Testis (tissue), 5 donors: ENCODE measurements at regions of chr14 and their contacts with region 1.

Region 1: GRCh38 chr14:39432179-39432618 is at the start of gene FBXO33:
- DNase-seq: peak; percentile 97
- H3K4me3 ChIP-seq: peak within 1 kb of the TSS; percentile 82 to 98
- H3K27ac ChIP-seq: peak within 1 kb of the TSS; percentile 94 to 99
- H3K4me1 ChIP-seq: peaks cover 18% of the 10 kb centered on the region
- H3K27me3 ChIP-seq: no peaks in the 10 kb centered on the region
- CTCF ChIP-seq: no peak
- POLR2A ChIP-seq: no peak
- total RNA-seq, gene FBXO33: 20.6 to 27.5 TPM

Region 2: DNA sequence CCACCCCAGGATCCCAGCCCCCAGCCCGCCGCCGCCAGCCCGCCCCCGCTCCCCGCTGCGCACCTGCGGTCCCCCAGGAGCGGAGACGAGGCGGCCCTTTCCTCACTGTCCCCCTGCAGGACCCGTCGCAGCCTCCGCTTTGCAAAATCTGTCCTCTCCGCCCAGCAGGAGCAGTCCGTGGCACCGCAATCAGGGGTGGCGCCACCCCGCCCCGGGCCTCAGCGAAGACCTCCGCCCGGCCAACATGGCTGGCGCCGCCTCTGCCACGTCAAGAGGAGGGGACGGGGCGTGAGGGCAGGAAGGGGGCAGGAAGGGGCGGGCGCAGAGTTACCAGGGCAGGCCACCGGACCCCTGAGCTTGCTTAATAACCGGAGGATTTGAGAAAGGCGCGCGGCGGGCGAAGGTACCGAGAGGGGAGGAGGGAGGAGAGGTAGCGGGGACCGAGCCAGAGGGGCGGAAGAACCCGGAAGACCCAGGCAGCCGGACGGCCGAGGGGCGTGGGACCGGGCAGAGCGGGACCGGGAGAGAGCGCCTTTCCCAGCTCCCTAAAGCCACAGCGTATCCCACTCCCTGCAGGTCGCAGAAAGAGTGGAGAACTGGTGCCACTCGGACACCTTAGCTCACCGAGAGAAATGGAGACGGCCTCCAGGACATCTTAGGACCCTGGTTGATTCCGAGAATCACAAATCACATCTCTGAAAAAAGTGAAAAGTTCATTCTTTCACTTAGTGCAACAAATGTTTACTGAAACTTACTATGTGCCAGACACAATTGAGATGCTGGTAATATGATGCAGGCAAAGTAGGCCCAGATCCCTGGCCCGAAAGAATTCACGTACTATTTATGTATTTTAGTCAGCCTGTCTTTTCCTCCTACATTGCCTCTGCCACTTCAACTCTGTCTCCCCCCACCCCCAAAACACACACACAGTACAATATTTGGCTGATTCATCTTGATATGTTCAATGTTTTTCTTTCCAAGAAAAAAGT is 328.9 kb before region 1 on chr14 and contains the start of gene SEC23A:
- intact Hi-C with region 1: loop called (anchors 10 kb)
- DNase-seq: peak; percentile 92
- H3K4me3 ChIP-seq: peak within 1 kb of the TSS; percentile 90 to 96
- H3K27ac ChIP-seq: peak within 1 kb of the TSS; percentile 96 to 98
- H3K4me1 ChIP-seq: peaks cover 6% of the 10 kb centered on the region
- H3K27me3 ChIP-seq: no peaks in the 10 kb centered on the region
- CTCF ChIP-seq: no peak
- POLR2A ChIP-seq: no peak
- total RNA-seq, gene SEC23A: 52.4 to 79.2 TPM

Region 3: DNA sequence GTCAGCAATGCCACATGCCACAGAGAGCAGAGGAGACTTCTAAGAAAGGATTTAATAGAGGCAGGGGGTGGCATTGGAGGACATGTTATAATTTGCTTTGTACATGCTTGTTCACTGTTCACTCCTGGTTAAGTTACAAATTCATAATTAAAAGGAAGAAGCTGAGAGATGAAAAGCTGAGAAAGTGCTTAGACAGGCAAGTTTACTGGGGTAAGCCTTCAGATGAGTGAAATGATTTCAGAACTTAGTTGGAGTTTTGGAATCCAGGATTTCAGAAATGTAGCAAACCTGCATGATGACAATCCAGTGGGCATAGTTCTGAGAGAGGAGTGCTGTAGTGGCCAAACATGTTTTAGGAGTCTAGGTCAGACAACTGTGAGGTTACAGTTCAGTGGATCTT is 67.3 kb after region 1 on chr14:
- intact Hi-C with region 1: no loop called
- DNase-seq: no peak
- H3K4me3 ChIP-seq: no peak overlapping the region
- H3K27ac ChIP-seq: no peak overlapping the region
- H3K4me1 ChIP-seq: no peaks in the 10 kb centered on the region
- H3K27me3 ChIP-seq: no peaks in the 10 kb centered on the region
- CTCF ChIP-seq: no peak
- POLR2A ChIP-seq: no peak